Right ventricle myocardium inferior (tissue), 1 donor: ENCODE measurements at regions of chr1 and their contacts with region 1.

Region 1: GRCh38 chr1:240027059-240027462 is 64.6 kb upstream of the FMN2 start:
- DNase-seq: no peak
- ATAC-seq: no peak

Region 2: DNA sequence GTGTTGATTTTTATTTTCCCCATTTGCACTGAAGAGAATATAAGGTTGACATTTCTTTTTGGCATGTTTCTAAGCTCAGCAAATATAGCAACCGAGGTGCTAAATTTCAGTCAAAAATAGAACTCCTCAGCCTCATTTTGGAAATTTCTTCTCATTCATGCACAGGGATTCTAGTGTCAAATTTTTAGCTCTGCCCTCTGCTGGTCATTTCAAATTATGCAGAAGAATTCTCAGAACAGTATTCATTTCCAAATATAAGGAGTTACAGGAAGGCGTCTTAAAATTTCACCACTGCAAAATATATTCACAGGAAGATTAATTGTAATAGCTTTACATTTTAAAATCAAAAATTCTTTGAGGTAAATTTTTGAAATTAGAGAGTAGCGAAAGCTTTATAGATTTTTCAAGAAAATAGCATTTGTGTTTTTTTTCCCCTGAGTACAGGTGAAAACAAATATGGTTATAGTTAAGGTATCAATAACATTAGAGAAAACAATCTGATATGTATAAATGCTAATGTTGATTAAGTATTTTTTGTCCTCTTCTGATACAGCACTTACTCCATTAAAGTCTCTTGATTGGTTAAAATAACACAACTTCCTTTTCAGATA is 122.5 kb after region 1 on chr1:
- intact Hi-C with region 1: loop called (anchors 5 kb)
- DNase-seq: no peak
- ATAC-seq: no peak

Region 3: GRCh38 chr1:240254778-240255291 is 227.8 kb after region 1 on chr1:
- intact Hi-C with region 1: no loop called
- DNase-seq: no peak
- ATAC-seq: no peak